ENCODE measurements at regions of chr14 and their contacts with region 1.

Region 1: DNA sequence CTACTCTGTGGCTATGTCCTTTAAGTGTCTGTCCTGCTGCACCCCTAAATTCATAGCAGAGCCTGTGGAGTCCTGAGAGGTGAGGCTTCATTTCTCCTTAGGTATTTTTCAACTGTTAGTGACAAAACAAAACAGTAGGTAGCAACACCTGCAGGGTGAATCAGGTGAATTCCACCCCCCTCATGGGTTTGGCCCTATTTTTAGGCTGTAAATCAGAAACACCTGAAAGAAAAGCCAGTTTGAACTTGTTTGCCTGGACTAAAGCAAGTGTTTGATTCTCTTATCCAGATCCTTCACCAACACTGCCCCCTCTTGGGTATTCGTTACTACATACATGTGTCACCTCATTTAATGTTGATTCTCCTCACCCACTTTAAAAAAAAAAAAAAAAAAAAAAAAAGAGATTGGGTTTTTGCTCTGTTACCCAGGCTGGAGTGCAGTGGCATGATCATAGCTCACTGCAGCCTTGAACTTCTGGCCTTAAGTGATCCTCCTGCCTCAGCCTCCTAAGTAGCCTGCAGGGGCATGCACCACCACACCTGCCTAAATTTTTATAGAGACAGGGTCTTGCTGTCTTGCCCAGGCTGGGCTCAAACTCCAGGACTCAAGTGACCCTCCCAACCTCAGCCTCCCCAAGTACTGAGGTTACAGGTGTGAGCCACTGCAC is 10.3 kb downstream of the TBPL2 start:
- DNase-seq: peak; percentile 65 to 79 (median 73)
- H3K4me3 ChIP-seq: no peak overlapping the region
- H3K4me3 Mint-ChIP-seq: peak overlapping the region in 1 of 8 donors; percentile 43
- H3K27ac ChIP-seq: no peak overlapping the region
- H3K27ac Mint-ChIP-seq: peak overlapping the region in 6 of 7 donors; percentile 39 to 91 (median 72)
- H3K4me1 ChIP-seq: peaks cover 32% of the 10 kb centered on the region
- H3K4me1 Mint-ChIP-seq: peaks cover 32 to 40% (median 34%) of the 10 kb centered on the region in 4 donors
- H3K27me3 ChIP-seq: no peaks in the 10 kb centered on the region
- H3K27me3 Mint-ChIP-seq: no peaks in the 10 kb centered on the region

Region 2: DNA sequence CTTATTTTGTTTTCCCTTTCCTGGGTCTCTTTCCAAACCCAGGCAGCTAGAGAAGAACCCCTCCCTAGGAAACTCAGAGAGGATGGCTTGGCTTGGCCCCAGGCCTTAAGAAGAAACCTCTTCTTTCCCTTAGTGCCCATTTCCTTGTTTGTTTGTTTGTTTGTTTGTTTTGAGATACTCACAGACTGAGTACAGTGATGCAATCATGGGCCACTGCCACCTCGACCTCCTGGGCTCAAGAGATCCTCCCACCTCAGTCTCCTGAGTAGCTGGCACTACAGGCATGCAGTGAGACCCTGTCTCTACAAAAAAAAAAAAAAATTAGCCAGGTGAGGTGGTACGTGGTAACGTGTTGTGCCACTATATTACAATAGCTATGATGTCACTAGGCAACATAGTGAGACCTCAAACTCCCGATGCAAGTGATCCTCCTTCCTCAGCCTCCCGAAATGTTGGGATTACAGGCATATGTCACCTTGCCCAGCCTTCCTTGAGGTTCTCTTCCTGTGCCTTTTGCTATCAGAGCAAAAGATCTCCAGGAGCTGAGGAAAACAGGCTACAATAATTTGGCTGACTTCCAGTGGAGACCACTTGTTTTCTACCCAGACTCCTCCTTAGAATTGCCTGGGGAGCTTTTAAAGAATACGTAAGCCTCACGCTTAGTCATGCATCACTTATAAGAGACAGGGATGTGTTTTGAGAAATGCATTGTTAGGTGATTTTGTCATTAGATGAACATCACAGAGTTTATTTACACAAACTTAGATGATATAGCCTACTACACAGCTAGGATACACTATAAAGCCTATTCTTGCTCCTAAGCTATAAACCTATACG is 335.6 kb before region 1 on chr14:
- CTCF ChIA-PET with region 1: no interaction called
- POLR2A ChIA-PET with region 1: no interaction called
- intact Hi-C with region 1: loop called (anchors 1 kb)
- DNase-seq: no peak
- H3K4me3 ChIP-seq: no peak overlapping the region
- H3K4me3 Mint-ChIP-seq: no peak overlapping the region
- H3K27ac ChIP-seq: no peak overlapping the region
- H3K27ac Mint-ChIP-seq: no peak overlapping the region
- H3K4me1 ChIP-seq: peaks cover 21% of the 10 kb centered on the region
- H3K4me1 Mint-ChIP-seq: peaks cover 19 to 23% (median 20%) of the 10 kb centered on the region in 4 donors
- H3K27me3 ChIP-seq: no peaks in the 10 kb centered on the region
- H3K27me3 Mint-ChIP-seq: no peaks in the 10 kb centered on the region

Region 3: DNA sequence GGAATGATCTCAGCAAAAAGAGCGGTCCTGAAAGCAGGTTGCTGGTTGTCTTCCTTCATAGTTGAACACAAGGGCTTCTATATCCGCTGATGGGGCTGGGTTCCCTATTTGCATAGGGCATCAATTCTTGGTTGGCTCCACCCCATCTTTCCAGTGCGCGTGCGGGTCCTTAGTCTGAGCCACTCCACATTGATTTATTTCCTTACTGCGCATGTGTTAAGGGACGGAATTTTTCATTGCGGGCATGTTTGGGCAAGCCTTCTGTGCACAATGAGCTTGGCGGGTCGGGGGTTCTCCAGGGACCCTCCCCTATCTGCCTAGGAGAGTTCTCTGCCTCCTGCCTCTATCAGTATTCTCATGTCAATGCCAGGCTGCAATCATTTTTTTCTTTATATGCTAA is 217.5 kb before region 1 on chr14:
- CTCF ChIA-PET with region 1: interaction called, 11 read pairs
- POLR2A ChIA-PET with region 1: no interaction called
- intact Hi-C with region 1: loop called (anchors 1 kb)
- DNase-seq: no peak
- H3K4me3 ChIP-seq: no peak overlapping the region
- H3K4me3 Mint-ChIP-seq: no peak overlapping the region
- H3K27ac ChIP-seq: no peak overlapping the region
- H3K27ac Mint-ChIP-seq: no peak overlapping the region
- H3K4me1 ChIP-seq: no peaks in the 10 kb centered on the region
- H3K4me1 Mint-ChIP-seq: peaks cover 0 to 5% (median 2%) of the 10 kb centered on the region in 4 donors
- H3K27me3 ChIP-seq: no peaks in the 10 kb centered on the region
- H3K27me3 Mint-ChIP-seq: peaks cover 0 to 1% of the 10 kb centered on the region in 2 donors

Region 4: DNA sequence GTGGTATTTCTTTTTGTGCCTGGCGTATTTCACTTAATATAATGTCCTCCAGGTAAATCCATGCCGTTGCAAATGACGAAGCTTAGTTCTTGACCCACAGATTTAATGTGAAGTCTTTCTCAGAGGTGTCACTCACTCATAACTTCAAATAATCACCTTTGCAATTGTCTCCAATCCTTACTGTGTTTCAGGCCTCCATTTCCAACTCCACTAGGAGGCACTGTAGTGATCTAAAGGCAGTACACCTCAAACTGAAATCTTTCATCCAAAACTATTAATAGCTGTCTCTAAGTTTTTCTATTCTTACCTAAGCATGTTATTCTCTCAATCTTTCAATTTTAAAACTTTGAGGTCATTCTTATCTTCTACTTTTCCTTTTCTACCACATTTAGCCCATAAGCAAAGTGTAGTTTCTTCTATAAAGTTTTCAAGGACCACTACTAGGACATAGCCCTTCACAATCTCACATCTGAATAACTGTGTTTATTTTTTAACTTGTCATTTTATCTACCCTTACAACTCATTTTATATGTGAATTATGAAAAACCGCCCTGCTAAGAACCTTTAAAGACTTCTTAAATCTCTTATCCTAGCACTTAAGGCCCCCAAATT is 184.4 kb before region 1 on chr14:
- CTCF ChIA-PET with region 1: interaction called, 35 read pairs
- POLR2A ChIA-PET with region 1: no interaction called
- intact Hi-C with region 1: loop called (anchors 1 kb)
- DNase-seq: peak; percentile 43 to 61 (median 48)
- H3K4me3 ChIP-seq: no peak overlapping the region
- H3K4me3 Mint-ChIP-seq: no peak overlapping the region
- H3K27ac ChIP-seq: no peak overlapping the region
- H3K27ac Mint-ChIP-seq: peak overlapping the region in 1 of 7 donors; percentile 50
- H3K4me1 ChIP-seq: no peaks in the 10 kb centered on the region
- H3K4me1 Mint-ChIP-seq: peaks cover 0 to 1% (median 0%) of the 10 kb centered on the region in 4 donors
- H3K27me3 ChIP-seq: no peaks in the 10 kb centered on the region
- H3K27me3 Mint-ChIP-seq: peaks cover 8% of the 10 kb centered on the region in 2 donors

Region 5: GRCh38 chr14:55411426-55412389 is 18.4 kb before region 1 on chr14 and contains the start of gene ATG14:
- CTCF ChIA-PET with region 1: interaction called, 22 read pairs
- POLR2A ChIA-PET with region 1: interaction called, 6 read pairs
- intact Hi-C with region 1: loop called (anchors 2 kb)
- DNase-seq: peak; percentile 65 to 76 (median 73)
- H3K4me3 ChIP-seq: peak within 1 kb of the TSS; percentile 90 to 93
- H3K4me3 Mint-ChIP-seq: peak within 1 kb of the TSS; percentile 88 to 94 (median 92)
- H3K27ac ChIP-seq: peak within 1 kb of the TSS; percentile 78
- H3K27ac Mint-ChIP-seq: peak within 1 kb of the TSS; percentile 45 to 96 (median 91)
- H3K4me1 ChIP-seq: peaks cover 24% of the 10 kb centered on the region
- H3K4me1 Mint-ChIP-seq: peaks cover 27 to 49% (median 38%) of the 10 kb centered on the region in 4 donors
- H3K27me3 ChIP-seq: no peaks in the 10 kb centered on the region
- H3K27me3 Mint-ChIP-seq: peaks cover 0 to 2% of the 10 kb centered on the region in 2 donors
- total RNA-seq, gene ATG14: 18.3 to 18.4 TPM

Region 6: DNA sequence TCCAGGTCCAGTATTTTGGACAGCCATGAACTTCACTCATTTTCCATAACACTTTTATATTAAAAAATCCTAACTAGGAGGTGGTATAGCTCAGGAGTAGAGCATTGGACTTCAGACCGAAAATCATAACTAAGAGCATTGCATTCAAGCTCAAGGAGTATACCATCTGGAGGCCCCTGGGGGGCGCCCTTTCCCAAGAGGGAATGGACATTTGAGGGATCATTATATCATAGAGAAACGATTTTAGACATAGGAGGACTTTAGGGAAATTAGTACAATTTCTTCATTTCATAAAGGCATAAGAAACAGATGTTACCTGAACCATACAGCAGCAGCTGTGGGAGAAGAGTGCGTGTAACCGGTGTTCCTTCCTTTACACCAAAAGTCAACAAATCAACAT is 13.3 kb before region 1 on chr14:
- CTCF ChIA-PET with region 1: interaction called, 22 read pairs
- POLR2A ChIA-PET with region 1: interaction called, 3 read pairs
- intact Hi-C with region 1: no loop called
- DNase-seq: no peak
- H3K4me3 ChIP-seq: no peak overlapping the region
- H3K4me3 Mint-ChIP-seq: no peak overlapping the region
- H3K27ac ChIP-seq: no peak overlapping the region
- H3K27ac Mint-ChIP-seq: no peak overlapping the region
- H3K4me1 ChIP-seq: peaks cover 6% of the 10 kb centered on the region
- H3K4me1 Mint-ChIP-seq: peaks cover 6 to 10% (median 6%) of the 10 kb centered on the region in 4 donors
- H3K27me3 ChIP-seq: no peaks in the 10 kb centered on the region
- H3K27me3 Mint-ChIP-seq: peaks cover 0 to 2% of the 10 kb centered on the region in 2 donors

Region 7: DNA sequence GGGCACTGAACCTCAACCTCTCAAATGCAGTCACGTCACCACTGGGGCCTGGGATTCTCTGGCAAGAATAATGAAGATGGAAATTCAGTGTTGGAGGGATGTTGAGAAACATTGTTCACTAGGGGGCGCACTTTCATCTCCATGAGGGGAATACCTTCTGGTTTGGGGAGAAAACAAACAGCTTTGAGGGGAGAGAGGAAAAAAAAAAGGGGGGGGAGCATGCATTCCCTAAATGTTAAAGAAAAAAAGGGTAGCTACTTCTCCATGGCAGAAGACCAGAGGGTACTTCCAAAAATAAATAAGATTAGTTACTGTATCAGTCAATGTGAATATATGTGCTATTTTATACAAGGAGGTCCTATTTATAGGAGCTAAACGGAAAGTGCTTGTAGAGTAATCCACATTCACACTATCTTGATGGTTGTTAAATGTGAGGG is 16.1 kb after region 1 on chr14:
- CTCF ChIA-PET with region 1: interaction called, 64 read pairs
- POLR2A ChIA-PET with region 1: interaction called, 4 read pairs
- intact Hi-C with region 1: no loop called
- DNase-seq: peak; percentile 40 to 57 (median 53)
- H3K4me3 ChIP-seq: no peak overlapping the region
- H3K4me3 Mint-ChIP-seq: no peak overlapping the region
- H3K27ac ChIP-seq: no peak overlapping the region
- H3K27ac Mint-ChIP-seq: no peak overlapping the region
- H3K4me1 ChIP-seq: no peaks in the 10 kb centered on the region
- H3K4me1 Mint-ChIP-seq: peaks cover 0 to 3% (median 1%) of the 10 kb centered on the region in 4 donors
- H3K27me3 ChIP-seq: no peaks in the 10 kb centered on the region
- H3K27me3 Mint-ChIP-seq: peaks cover 0 to 1% of the 10 kb centered on the region in 2 donors